ENCODE measurements at regions of chr7 and their contacts with region 1.

Region 1: DNA sequence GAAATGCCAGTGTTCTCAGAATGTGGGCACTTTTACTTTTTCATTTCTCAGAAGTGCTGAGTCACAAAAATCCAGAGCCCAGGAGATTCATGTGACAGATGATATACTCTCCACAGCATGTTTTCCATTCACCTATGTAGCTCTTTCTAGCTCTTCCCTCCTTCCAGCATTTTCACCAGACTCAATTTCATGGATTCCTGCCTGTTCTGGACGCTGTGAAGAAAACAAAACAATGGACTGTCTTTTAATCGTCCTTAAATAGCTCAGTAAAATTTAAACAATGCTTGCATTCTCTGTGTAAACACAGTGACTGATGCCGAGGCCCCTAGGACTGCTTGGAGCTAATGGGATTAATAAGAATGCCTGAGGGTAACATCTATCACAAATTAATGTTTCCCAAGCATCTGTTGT is 25.5 kb downstream of the ZNF713 start:
- DNase-seq: no peak
- ATAC-seq: no peak
- H3K4me3 ChIP-seq: no peak overlapping the region
- H3K27ac ChIP-seq: no peak overlapping the region
- H3K4me1 ChIP-seq: no peaks in the 10 kb centered on the region
- H3K27me3 ChIP-seq: no peaks in the 10 kb centered on the region
- CTCF ChIP-seq: no peak
- POLR2A ChIP-seq: no peak

Region 2: GRCh38 chr7:55827577-55827976 is 85.2 kb before region 1 on chr7:
- in situ Hi-C with region 1: no loop called
- intact Hi-C with region 1: loop called (anchors 10 kb)
- DNase-seq: no peak
- ATAC-seq: no peak
- H3K4me3 ChIP-seq: no peak overlapping the region
- H3K27ac ChIP-seq: no peak overlapping the region
- H3K4me1 ChIP-seq: no peaks in the 10 kb centered on the region
- H3K27me3 ChIP-seq: no peaks in the 10 kb centered on the region
- CTCF ChIP-seq: no peak
- POLR2A ChIP-seq: no peak